HepG2 (cell line): ENCODE measurements at regions of chr11 and their contacts with region 1.

Region 1: GRCh38 chr11:15367695-15368094 is 253.0 kb downstream of the INSC start:
- DNase-seq: no peak
- ATAC-seq: no peak
- H3K4me3 ChIP-seq: no peak overlapping the region
- H3K27ac ChIP-seq: no peak overlapping the region
- H3K4me1 ChIP-seq: no peaks in the 10 kb centered on the region
- H3K27me3 ChIP-seq: peaks cover 0 to 5% of the 10 kb centered on the region in 2 experiments; a peak in 1 of 5 replicates
- CTCF ChIP-seq: no peak
- EP300 ChIP-seq: no peak
- POLR2A ChIP-seq: no peak
- RAD21 ChIP-seq: no peak

Region 2: GRCh38 chr11:15313862-15314261 is 53.8 kb before region 1 on chr11:
- CTCF ChIA-PET with region 1: no interaction called
- POLR2A ChIA-PET with region 1: no interaction called
- in situ Hi-C with region 1: no loop called
- intact Hi-C with region 1: loop called (anchors 2 kb)
- DNase-seq: no peak
- ATAC-seq: no peak
- H3K4me3 ChIP-seq: no peak overlapping the region
- H3K27ac ChIP-seq: no peak overlapping the region
- H3K4me1 ChIP-seq: no peaks in the 10 kb centered on the region
- H3K27me3 ChIP-seq: no peaks in the 10 kb centered on the region
- CTCF ChIP-seq: no peak
- EP300 ChIP-seq: no peak
- POLR2A ChIP-seq: no peak
- RAD21 ChIP-seq: no peak

Region 3: GRCh38 chr11:15412054-15412453 is 44.4 kb after region 1 on chr11:
- CTCF ChIA-PET with region 1: no interaction called
- POLR2A ChIA-PET with region 1: no interaction called
- in situ Hi-C with region 1: no loop called
- intact Hi-C with region 1: no loop called
- DNase-seq: no peak
- ATAC-seq: no peak
- H3K4me3 ChIP-seq: no peak overlapping the region
- H3K27ac ChIP-seq: no peak overlapping the region
- H3K4me1 ChIP-seq: no peaks in the 10 kb centered on the region
- H3K27me3 ChIP-seq: no peaks in the 10 kb centered on the region
- CTCF ChIP-seq: no peak
- EP300 ChIP-seq: no peak
- POLR2A ChIP-seq: no peak
- RAD21 ChIP-seq: no peak

Region 4: GRCh38 chr11:15497366-15497765 is 129.7 kb after region 1 on chr11:
- CTCF ChIA-PET with region 1: no interaction called
- POLR2A ChIA-PET with region 1: no interaction called
- in situ Hi-C with region 1: no loop called
- intact Hi-C with region 1: no loop called
- DNase-seq: no peak
- ATAC-seq: no peak
- H3K4me3 ChIP-seq: no peak overlapping the region
- H3K27ac ChIP-seq: no peak overlapping the region
- H3K4me1 ChIP-seq: no peaks in the 10 kb centered on the region
- H3K27me3 ChIP-seq: no peaks in the 10 kb centered on the region
- CTCF ChIP-seq: no peak
- EP300 ChIP-seq: no peak
- POLR2A ChIP-seq: no peak
- RAD21 ChIP-seq: no peak